Ascending aorta (tissue), 2 donors: ENCODE measurements at regions of chr4 and their contacts with region 1.

Region 1: DNA sequence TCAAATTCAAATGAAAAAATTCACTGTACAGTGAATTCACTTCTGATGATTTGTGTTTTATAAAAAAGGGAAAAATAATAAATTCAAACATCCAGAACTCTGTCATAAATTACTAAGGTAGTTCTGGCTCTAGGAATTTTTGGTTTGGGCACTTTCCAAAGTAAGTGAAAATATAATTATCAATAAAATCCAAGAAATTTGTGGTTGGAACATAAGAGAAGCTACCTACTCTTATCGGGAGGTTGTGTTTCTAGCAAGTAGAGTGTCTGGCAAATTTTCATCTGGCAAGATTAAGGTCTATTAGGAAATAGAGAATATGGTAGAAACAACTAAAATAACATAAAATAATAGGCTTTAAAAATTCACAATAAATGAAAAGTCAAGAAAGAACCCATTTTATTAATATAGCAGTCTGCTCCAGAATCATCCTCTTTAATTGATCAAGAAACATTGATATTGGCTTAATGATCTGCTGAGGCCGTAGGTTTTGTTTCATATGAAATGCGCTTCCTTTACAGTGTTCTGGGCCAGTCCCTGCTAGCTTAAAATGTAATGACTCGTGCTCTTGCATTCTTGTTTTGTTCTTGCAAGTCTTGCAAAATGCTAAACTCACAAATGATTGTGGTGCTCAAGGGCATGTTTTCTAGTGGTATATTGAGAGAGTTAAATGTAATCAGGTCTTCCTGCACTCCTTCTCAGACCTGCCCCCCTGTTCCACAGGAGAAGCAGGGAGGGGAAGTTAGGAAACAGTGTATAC is 331.4 kb downstream of the RAPGEF2 start:
- DNase-seq: no peak
- H3K4me3 ChIP-seq: no peak overlapping the region
- H3K27ac ChIP-seq: peak overlapping the region in 1 of 2 donors; percentile 33
- H3K4me1 ChIP-seq: peaks cover 0 to 6% of the 10 kb centered on the region in 2 donors
- H3K27me3 ChIP-seq: no peaks in the 10 kb centered on the region
- CTCF ChIP-seq: no peak

Region 2: GRCh38 chr4:159398236-159398638 is 36.1 kb before region 1 on chr4:
- intact Hi-C with region 1: loop called (anchors 5 kb)
- DNase-seq: no peak
- H3K4me3 ChIP-seq: no peak overlapping the region
- H3K27ac ChIP-seq: peak overlapping the region; percentile 65 to 67
- H3K4me1 ChIP-seq: peaks cover 6 to 23% of the 10 kb centered on the region in 2 donors
- H3K27me3 ChIP-seq: no peaks in the 10 kb centered on the region
- CTCF ChIP-seq: peak in 1 of 3 experiments; percentile 32